Right ventricle myocardium inferior (tissue), 1 donor: ENCODE measurements at regions of chr4 and their contacts with region 1.

Region 1: GRCh38 chr4:113684534-113685091 is 76.9 kb downstream of the CAMK2D start:
- DNase-seq: peak; percentile 65
- ATAC-seq: peak; percentile 96

Region 2: DNA sequence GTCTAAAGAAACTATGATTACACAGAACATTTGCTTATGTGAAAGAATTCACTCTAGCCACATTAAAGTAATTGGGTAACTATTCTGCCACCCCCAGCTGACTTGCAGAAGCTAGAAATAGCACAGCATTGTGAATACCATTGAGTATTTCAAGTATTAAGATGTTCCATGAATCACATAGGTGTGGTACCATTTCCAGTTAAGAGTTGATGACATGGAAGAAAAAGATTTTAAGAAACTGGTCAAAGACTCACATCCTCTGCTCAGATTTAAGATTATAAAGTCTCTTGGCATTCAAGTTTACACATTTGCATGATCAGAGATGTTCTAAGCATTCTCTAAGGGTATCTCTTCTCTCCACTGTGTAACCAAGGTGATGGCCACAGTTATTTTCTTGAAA is 210.6 kb before region 1 on chr4:
- intact Hi-C with region 1: no loop called
- DNase-seq: no peak
- ATAC-seq: no peak

Region 3: GRCh38 chr4:113547487-113548042 is 137.0 kb before region 1 on chr4:
- intact Hi-C with region 1: loop called (anchors 5 kb)
- DNase-seq: peak; percentile 86
- ATAC-seq: peak; percentile 98

Region 4: GRCh38 chr4:113572620-113573019 is 112.0 kb before region 1 on chr4:
- intact Hi-C with region 1: no loop called
- DNase-seq: no peak
- ATAC-seq: no peak

Region 5: GRCh38 chr4:113584407-113585150 is 100.0 kb before region 1 on chr4:
- intact Hi-C with region 1: loop called (anchors 5 kb)
- DNase-seq: no peak
- ATAC-seq: peak; percentile 42